Natural killer cell (primary cell): ENCODE measurements at regions of chr6 and their contacts with region 1.

Region 1: DNA sequence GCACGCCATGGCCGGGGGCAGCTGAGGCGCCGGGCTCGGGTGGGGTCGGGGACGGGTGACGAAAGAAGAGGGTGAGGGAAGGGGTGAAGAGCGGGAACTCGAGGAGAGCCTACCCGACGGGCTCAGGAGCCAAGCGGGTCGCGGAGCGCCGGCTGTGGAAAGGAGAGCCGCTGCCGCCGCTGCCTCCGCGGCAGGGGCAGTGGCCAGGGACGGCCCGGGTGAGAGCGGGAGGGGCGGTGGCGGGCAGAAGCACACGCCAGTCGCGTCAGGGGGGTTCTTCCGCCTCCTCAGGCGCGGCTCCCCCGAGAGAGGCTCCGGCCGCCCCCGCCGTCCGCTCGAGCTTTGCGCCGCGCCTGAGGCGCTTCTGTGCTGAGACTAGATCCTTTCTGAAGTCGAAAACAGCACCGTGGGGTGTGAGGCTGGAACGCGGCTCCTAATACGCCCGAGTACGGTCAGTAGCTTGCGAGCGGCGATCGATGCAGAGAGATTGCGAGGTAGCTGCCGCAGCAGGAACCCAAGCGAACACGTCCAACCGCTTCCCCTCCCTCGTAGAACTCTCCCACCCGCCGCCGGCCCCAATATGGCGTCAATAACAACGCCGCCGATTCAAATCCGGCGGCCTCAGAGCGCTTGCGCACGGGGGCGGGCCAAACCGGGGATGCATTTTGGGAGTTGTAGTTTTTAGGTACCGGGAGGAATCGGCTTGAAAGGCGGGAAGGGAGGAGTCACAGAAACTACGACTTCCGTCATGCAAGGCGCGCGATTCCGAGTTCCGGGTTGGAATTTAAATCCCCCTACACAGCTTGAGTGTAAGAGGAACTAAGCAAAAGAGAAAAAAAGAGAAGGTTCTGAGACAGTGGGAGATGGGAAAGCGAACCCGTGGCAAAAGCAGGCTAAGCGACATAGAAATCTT is at the start of gene AKIRIN2:
- DNase-seq: peak; percentile 97 to 99
- ATAC-seq: peak; percentile 78 to 92 (median 83)
- H3K4me3 ChIP-seq: peak within 1 kb of the TSS; percentile 87
- H3K4me3 Mint-ChIP-seq: peak within 1 kb of the TSS; percentile 99
- H3K27ac ChIP-seq: peak within 1 kb of the TSS; percentile 97
- H3K27ac Mint-ChIP-seq: peak within 1 kb of the TSS; percentile 94 to 98
- H3K4me1 ChIP-seq: no peaks in the 10 kb centered on the region
- H3K4me1 Mint-ChIP-seq: peaks cover 51 to 54% of the 10 kb centered on the region in 2 donors
- H3K27me3 ChIP-seq: no peaks in the 10 kb centered on the region
- H3K27me3 Mint-ChIP-seq: no peaks in the 10 kb centered on the region
- CTCF ChIP-seq: no peak
- total RNA-seq, gene AKIRIN2: 102 to 156 (median 108) TPM

Region 2: DNA sequence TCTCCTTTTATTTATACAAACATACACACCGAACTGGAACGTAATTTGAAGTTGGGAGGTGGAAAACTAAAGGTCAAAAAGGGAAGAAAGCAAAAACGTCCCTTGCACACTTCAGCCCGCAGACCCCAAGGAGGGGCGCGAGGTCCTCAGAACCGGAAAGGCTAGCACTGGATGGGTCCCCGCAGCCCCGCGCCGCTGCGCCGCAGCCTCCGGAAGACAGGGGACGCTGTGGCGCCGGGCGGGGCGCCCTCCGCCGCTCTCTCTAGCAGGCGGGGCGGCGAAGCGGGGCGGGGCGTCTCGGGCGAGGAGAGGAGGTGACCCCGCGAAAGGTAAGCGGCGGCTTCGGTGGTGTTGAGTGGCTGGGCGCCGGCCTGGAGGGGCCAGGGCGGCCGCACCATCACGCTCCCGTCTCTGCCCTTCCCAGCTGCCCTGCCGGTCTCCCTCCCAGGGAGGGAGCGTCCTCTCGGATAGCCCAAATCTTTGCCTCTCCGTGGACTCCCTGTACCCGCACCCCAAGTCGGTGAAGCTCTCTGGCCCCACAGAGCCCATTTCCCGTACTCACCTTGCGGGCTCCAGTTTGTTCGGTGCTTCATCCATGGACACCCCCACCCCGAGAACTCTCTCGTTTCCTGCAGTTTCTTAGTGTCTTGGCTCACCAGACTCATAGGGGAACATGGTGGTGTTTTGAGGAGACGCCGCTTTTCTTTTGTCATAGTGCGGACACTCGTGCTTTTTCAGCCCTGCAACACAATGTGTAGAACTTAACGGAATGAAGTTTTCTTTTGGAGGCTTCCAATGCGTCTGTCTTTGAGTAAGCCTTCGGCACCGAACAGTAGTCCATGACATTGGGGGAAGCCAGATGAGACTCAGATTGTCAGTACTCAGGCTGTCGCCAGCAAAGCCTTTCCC is 379.4 kb before region 1 on chr6 and contains the start of gene SMIM8:
- intact Hi-C with region 1: loop called (anchors 10 kb)
- DNase-seq: peak; percentile 83 to 88
- ATAC-seq: peak; percentile 99 to 100 (median 100)
- H3K4me3 ChIP-seq: peak within 1 kb of the TSS; percentile 89
- H3K4me3 Mint-ChIP-seq: peak within 1 kb of the TSS; percentile 99
- H3K27ac ChIP-seq: peak within 1 kb of the TSS; percentile 49
- H3K27ac Mint-ChIP-seq: peak within 1 kb of the TSS; percentile 85 to 92
- H3K4me1 ChIP-seq: peaks cover 6% of the 10 kb centered on the region
- H3K4me1 Mint-ChIP-seq: peaks cover 13 to 23% of the 10 kb centered on the region in 2 donors
- H3K27me3 ChIP-seq: no peaks in the 10 kb centered on the region
- H3K27me3 Mint-ChIP-seq: peaks cover 8 to 9% of the 10 kb centered on the region in 2 donors
- CTCF ChIP-seq: peak; percentile 100
- total RNA-seq, gene SMIM8: 8.0 to 11.1 (median 9.5) TPM

Region 3: GRCh38 chr6:87514831-87515230 is 187.1 kb before region 1 on chr6:
- intact Hi-C with region 1: no loop called
- DNase-seq: no peak
- ATAC-seq: no peak
- H3K4me3 ChIP-seq: no peak overlapping the region
- H3K4me3 Mint-ChIP-seq: no peak overlapping the region
- H3K27ac ChIP-seq: no peak overlapping the region
- H3K27ac Mint-ChIP-seq: peak overlapping the region; percentile 13 to 62
- H3K4me1 ChIP-seq: no peaks in the 10 kb centered on the region
- H3K4me1 Mint-ChIP-seq: no peaks in the 10 kb centered on the region
- H3K27me3 ChIP-seq: no peaks in the 10 kb centered on the region
- H3K27me3 Mint-ChIP-seq: no peaks in the 10 kb centered on the region
- CTCF ChIP-seq: no peak

Region 4: DNA sequence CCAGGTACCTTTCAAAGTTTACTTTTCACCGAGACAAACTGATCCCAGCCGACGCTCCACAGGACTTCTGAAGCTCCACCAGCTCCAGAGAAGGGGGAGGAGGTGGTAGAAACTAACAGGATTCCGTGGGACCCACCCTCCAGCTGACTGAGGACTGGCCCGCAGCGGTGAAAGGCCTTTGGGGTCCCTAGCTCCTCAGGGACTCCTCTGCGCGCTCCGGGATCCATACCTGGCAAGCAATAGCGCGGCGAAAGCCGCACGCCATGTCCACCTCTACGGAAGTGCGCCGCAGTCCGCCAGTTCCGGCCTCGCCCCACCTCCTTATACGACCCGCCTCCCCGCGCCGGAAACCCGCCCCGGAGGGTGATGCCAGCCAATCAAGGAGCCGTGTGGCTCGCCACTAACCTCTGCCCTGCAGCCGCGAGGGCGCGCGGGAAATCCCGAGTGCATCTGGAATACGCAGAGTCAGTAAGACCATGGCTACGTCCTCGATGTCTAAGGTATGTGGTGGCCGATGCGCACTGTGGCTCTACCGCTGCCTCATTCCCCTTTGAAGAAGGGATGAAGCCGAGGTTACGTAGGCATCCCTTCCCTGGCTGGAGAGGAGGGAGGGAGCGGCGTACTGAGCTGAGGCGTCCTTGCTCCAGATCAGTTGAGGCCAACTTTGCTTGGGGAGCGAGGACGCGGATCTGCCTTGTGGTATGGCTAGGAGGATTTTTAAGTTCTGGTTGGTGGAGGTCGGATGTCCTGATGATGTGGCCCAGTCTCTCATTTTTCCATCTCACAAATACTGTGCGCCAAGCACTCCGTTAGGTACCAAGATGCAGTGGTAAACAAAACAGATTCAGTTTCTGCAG is 112.0 kb before region 1 on chr6 and contains the starts of genes ORC3 and RARS2:
- intact Hi-C with region 1: loop called (anchors 1 kb)
- DNase-seq: peak; percentile 93 to 96
- ATAC-seq: peak; percentile 98 to 100 (median 99)
- H3K4me3 ChIP-seq: peak within 1 kb of the TSS; percentile 80
- H3K4me3 Mint-ChIP-seq: peak within 1 kb of the TSS; percentile 88
- H3K27ac ChIP-seq: peak within 1 kb of the TSS; percentile 73
- H3K27ac Mint-ChIP-seq: peak within 1 kb of the TSS; percentile 85 to 90
- H3K4me1 ChIP-seq: peaks cover 16% of the 10 kb centered on the region
- H3K4me1 Mint-ChIP-seq: peaks cover 50 to 51% of the 10 kb centered on the region in 2 donors
- H3K27me3 ChIP-seq: no peaks in the 10 kb centered on the region
- H3K27me3 Mint-ChIP-seq: no peaks in the 10 kb centered on the region
- CTCF ChIP-seq: no peak
- total RNA-seq, gene ORC3: 13.1 to 13.4 (median 13.3) TPM
- total RNA-seq, gene RARS2: 21.8 to 26.5 (median 24.2) TPM

Region 5: DNA sequence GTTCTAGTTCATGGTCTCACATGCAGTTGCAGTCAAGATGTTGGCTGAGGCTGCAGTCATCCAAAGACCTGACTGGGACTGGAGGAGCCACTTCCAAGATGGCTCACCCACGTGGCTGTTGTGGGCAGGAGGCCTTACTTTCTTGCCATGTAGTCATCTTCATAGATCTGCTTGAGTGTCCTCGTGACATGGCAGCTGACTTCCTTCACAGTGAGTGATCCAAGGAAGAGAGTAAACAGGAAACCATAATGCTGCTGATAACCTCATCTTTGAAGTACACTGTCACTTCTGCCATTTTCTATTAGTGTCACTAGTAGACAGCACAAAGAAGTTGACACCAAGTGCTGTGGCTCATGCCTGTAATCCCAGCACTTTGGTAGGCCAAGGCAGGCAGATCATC is 40.2 kb after region 1 on chr6:
- intact Hi-C with region 1: loop called (anchors 5 kb)
- DNase-seq: peak in 1 of 2 donors; percentile 75
- ATAC-seq: peak; percentile 78 to 83 (median 82)
- H3K4me3 ChIP-seq: no peak overlapping the region
- H3K4me3 Mint-ChIP-seq: no peak overlapping the region
- H3K27ac ChIP-seq: peak overlapping the region; percentile 8
- H3K27ac Mint-ChIP-seq: peak overlapping the region; percentile 25 to 53
- H3K4me1 ChIP-seq: peaks cover 19% of the 10 kb centered on the region
- H3K4me1 Mint-ChIP-seq: peaks cover 15 to 38% of the 10 kb centered on the region in 2 donors
- H3K27me3 ChIP-seq: no peaks in the 10 kb centered on the region
- H3K27me3 Mint-ChIP-seq: peaks cover 0 to 2% of the 10 kb centered on the region in 2 donors
- CTCF ChIP-seq: no peak